ENCODE measurements at regions of chr5 and their contacts with region 1.

Region 1: GRCh38 chr5:12883395-12883794 is 979.1 kb upstream of the CTNND2 start:
- DNase-seq: no peak
- ATAC-seq: no peak
- H3K4me3 ChIP-seq: no peak overlapping the region
- H3K4me3 Mint-ChIP-seq: no peak overlapping the region
- H3K27ac ChIP-seq: no peak overlapping the region
- H3K27ac Mint-ChIP-seq: no peak overlapping the region
- H3K4me1 ChIP-seq: no peaks in the 10 kb centered on the region
- H3K4me1 Mint-ChIP-seq: no peaks in the 10 kb centered on the region
- H3K27me3 ChIP-seq: no peaks in the 10 kb centered on the region
- H3K27me3 Mint-ChIP-seq: no peaks in the 10 kb centered on the region
- CTCF ChIP-seq: no peak

Region 2: DNA sequence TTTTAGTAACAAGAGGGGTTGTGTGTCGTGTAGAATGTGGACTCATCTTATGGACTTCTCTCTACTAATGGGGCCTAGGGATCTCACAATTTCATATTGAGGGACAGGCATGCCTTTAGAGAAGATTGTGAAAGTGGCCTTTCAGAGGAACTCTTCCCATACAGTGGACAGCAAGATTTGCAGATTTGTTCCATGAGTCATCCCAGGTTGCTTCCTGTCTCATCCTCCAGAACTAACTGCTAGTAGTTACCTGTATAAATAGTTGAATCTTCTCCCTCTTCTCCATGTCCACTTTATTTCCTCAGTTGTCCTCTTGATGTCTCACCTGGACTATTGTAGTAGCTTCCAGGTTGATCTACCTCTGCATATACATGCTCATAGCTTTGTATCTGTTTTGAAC is 18.3 kb after region 1 on chr5:
- CTCF ChIA-PET with region 1: no interaction called
- POLR2A ChIA-PET with region 1: no interaction called
- intact Hi-C with region 1: loop called in 1 of 2 experiments (anchors 1 kb)
- DNase-seq: no peak
- ATAC-seq: no peak
- H3K4me3 ChIP-seq: no peak overlapping the region
- H3K4me3 Mint-ChIP-seq: no peak overlapping the region
- H3K27ac ChIP-seq: no peak overlapping the region
- H3K27ac Mint-ChIP-seq: no peak overlapping the region
- H3K4me1 ChIP-seq: no peaks in the 10 kb centered on the region
- H3K4me1 Mint-ChIP-seq: no peaks in the 10 kb centered on the region
- H3K27me3 ChIP-seq: no peaks in the 10 kb centered on the region
- H3K27me3 Mint-ChIP-seq: no peaks in the 10 kb centered on the region
- CTCF ChIP-seq: no peak